ENCODE measurements at regions of chr2 and their contacts with region 1.

Region 1: DNA sequence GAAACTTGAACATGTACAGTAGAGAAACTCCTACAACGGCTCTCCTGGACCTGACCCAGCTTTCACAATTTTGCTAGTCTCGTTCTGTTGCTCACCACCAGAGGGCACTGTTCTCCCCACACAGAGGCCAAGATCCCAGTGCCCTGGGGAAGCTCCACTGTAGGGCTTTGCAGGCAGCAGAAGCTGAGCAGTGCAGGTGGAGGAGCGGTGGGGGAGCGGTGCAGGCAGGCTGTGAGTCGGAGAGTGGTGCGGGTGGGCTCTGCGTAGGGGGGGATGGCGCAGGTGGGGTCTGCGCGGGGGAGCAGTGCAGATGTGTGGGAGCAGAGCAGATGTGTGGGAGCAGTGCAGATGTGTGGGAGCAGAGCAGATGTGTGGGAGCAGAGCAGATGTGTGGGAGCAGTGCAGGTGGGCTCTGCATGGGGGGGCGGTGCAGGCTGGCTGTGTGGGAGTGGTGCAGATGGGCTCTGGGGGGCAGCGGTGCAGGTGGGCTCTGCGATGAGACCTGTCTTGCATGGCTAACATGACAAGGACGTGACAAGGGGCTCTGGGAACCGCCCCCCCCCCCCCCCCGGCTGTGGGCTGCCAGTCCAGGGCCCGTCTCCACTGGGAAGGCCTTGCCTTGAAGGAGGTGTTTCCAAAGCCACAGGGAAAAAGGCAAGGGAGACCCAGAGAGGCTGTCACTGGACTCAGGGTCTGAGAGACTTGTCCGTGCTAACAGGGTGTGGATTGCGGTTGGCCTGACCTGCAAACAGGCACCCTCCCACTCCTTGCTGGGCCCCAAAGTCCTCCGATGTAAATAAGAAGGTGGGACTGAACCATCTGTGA is 7.3 kb downstream of the CYS1 start:
- DNase-seq: peak; percentile 84
- H3K4me3 Mint-ChIP-seq: no peak overlapping the region
- H3K27ac Mint-ChIP-seq: no peak overlapping the region
- H3K4me1 Mint-ChIP-seq: peaks cover 7% of the 10 kb centered on the region
- H3K27me3 Mint-ChIP-seq: peaks cover 49% of the 10 kb centered on the region

Region 2: DNA sequence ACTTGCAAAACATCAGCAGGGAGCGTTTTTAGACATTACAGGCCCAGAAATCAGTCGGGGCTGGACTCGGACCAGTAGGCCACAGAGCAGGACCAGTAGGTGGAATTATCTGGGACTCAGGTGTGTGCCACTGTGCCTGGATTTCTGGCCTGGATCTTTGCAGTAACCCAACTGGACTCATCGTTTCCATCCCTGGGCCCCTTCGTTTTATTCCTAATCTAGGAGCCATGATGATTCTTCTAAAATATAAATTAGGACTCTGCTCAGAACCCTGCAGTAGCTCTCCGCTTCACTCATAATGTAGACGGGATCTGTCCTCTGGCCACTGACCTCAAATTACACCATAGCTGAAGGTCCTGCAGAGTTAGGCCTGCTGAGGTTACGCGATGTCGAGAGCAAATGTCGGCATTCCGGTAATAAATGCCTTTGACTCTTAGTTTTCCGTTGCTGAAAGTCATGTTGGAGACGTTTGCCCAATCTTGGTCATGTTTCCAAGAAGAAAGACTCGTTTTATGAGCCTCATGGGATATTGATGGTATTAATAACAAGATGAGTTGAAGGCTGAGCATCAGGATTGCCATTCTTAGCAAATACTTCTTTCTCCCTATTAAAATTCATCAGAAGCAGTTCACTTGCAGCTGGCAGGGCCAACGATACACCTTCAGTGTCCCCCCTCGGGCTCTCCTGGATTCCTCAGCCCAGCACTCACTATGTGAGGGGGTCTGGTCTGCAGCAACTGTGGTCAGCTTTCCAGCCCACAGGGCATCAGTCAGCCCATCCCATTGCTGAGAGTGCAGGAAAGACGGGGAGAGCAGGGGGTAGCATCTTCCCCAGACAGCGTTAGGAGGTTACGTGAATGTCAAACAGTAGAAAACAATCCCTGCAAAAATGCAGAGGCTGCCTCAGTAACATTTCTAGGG is 69.4 kb before region 1 on chr2:
- CTCF ChIA-PET with region 1: no interaction called
- POLR2A ChIA-PET with region 1: no interaction called
- DNase-seq: no peak
- H3K4me3 Mint-ChIP-seq: no peak overlapping the region
- H3K27ac Mint-ChIP-seq: no peak overlapping the region
- H3K4me1 Mint-ChIP-seq: peaks cover 1% of the 10 kb centered on the region
- H3K27me3 Mint-ChIP-seq: peaks cover 22% of the 10 kb centered on the region

Region 3: DNA sequence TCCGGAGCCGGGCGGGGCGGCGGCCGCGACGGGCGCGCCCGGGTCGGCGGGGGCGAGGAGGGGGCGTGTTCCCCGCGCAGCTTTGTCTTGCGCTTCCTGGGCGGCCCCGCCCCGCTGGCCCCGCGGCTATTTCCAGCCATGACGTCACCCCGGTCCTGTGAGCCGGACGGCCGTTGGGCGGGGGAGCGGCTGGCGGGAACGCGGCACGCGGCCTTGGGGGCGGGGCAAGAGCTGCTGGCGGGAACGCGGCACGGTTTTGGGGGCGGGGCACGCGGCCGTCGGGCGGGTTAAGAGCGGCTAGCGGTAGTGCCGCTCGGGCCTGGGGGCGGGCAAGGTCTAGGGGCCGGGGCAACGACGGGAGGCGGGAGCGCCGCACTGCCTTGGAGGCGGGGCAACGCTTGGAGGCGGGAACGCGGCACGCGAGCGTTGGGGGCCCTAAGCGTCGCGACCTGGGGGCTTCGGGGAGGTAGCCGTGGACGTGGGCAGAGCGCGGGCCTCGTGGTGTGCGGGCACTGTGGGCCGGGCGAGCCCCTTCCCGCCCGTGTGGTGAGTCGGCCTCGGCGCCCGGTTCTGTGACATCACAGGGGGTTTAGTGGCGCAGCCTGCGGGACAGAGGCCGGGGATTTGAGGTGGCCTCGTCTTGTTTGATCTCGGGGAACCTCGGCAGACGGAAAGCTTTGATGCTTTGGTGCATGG is 28.8 kb before region 1 on chr2:
- CTCF ChIA-PET with region 1: interaction called, 29 read pairs
- POLR2A ChIA-PET with region 1: interaction called, 3 read pairs
- DNase-seq: peak; percentile 95
- H3K4me3 Mint-ChIP-seq: peak overlapping the region; percentile 80
- H3K27ac Mint-ChIP-seq: peak overlapping the region; percentile 81
- H3K4me1 Mint-ChIP-seq: peaks cover 44% of the 10 kb centered on the region
- H3K27me3 Mint-ChIP-seq: peaks cover 26% of the 10 kb centered on the region

Region 4: GRCh38 chr2:10057231-10058107 is 15.4 kb before region 1 on chr2:
- CTCF ChIA-PET with region 1: interaction called, 29 read pairs
- POLR2A ChIA-PET with region 1: no interaction called
- DNase-seq: no peak
- H3K4me3 Mint-ChIP-seq: no peak overlapping the region
- H3K27ac Mint-ChIP-seq: no peak overlapping the region
- H3K4me1 Mint-ChIP-seq: peaks cover 5% of the 10 kb centered on the region
- H3K27me3 Mint-ChIP-seq: peaks cover 5% of the 10 kb centered on the region

Region 5: DNA sequence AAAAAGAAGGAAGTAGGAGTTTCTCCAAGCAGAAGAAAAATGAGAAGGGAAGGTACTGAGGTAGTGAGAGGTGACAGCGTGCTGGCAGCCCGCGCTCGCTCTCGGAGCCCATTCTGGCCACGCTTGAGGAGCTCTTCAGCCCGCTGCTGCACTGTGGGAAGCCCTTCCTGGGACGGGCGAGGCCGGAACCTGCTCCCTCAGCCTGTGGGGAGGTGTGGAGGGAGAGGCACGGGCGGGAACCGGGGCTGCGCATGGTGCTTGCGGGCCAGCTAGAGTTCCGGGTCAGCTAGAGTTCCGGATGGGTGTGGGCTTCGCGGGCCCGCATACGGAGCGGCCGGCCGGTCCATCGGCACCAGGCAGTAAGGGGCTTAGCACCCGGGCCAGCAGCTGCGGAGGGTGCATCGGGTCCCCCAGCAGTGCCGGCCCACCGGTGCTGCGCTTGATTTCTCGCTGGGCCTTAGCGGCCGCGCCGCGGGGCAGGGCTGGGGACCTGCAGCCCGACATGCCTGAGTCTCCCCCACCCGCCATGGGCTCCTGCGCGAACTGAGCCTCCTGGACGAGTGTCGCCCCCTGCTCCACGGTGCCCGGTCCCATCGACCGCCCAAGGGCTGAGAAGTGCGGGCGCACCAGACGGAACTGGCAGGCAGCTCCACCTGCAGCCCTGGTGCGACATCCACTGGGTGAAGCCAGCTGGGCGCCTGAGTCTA is 18.5 kb after region 1 on chr2:
- CTCF ChIA-PET with region 1: interaction called, 100 read pairs
- POLR2A ChIA-PET with region 1: interaction called, 7 read pairs
- DNase-seq: no peak
- H3K4me3 Mint-ChIP-seq: peak overlapping the region; percentile 32
- H3K27ac Mint-ChIP-seq: no peak overlapping the region
- H3K4me1 Mint-ChIP-seq: peaks cover 12% of the 10 kb centered on the region
- H3K27me3 Mint-ChIP-seq: peaks cover 59% of the 10 kb centered on the region

Region 6: GRCh38 chr2:10097352-10098148 is 24.7 kb after region 1 on chr2:
- CTCF ChIA-PET with region 1: interaction called, 100 read pairs
- POLR2A ChIA-PET with region 1: interaction called, 7 read pairs
- DNase-seq: peak; percentile 41
- H3K4me3 Mint-ChIP-seq: no peak overlapping the region
- H3K27ac Mint-ChIP-seq: no peak overlapping the region
- H3K4me1 Mint-ChIP-seq: peaks cover 6% of the 10 kb centered on the region
- H3K27me3 Mint-ChIP-seq: peaks cover 28% of the 10 kb centered on the region

Region 7: DNA sequence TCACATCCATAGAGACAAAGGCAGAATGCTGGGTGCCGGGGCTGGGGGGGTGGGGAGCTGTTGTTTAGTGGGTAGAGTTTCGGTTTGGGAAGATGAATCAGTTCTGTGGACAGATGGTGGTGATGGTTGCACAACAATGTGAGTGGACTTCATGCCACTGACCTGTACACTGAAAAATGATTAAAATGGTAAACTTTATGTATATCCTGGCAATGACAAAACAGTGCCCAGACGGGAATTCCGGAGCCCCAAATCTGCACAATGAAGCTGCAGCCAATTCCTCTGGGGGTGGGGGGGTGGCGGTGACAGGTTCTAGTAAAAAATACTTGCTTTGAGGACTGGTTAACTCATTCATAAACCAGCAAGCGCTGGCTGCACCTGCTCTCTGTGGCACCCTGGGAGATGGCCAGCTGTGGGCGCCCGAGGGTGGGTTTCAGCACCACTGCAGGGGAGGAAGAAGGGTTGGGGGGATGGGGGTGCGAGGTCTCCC is 148.1 kb after region 1 on chr2:
- CTCF ChIA-PET with region 1: no interaction called
- POLR2A ChIA-PET with region 1: no interaction called
- DNase-seq: no peak
- H3K4me3 Mint-ChIP-seq: no peak overlapping the region
- H3K27ac Mint-ChIP-seq: no peak overlapping the region
- H3K4me1 Mint-ChIP-seq: peaks cover 2% of the 10 kb centered on the region
- H3K27me3 Mint-ChIP-seq: no peaks in the 10 kb centered on the region

Region 8: GRCh38 chr2:10434886-10435819 is 362.3 kb after region 1 on chr2:
- CTCF ChIA-PET with region 1: interaction called, 90 read pairs
- POLR2A ChIA-PET with region 1: interaction called, 10 read pairs
- DNase-seq: peak; percentile 75
- H3K4me3 Mint-ChIP-seq: no peak overlapping the region
- H3K27ac Mint-ChIP-seq: no peak overlapping the region
- H3K4me1 Mint-ChIP-seq: peaks cover 15% of the 10 kb centered on the region
- H3K27me3 Mint-ChIP-seq: peaks cover 12% of the 10 kb centered on the region

Measured in activated CD4-positive, alpha-beta memory T cell treated with anti-CD3 and anti-CD28 coated beads, Interleukin-2, amount 10 ng/mL, durations not matched to agents 7 days and 5 days (primary cell).